ENCODE measurements at regions of chr4 and their contacts with region 1.

Region 1: GRCh38 chr4:74444891-74445642 is at the start of gene AREG:
- DNase-seq: peak; percentile 83
- ATAC-seq: peak; percentile 85
- H3K4me3 ChIP-seq: peak within 1 kb of the TSS; percentile 65 to 79
- H3K27ac ChIP-seq: peak within 1 kb of the TSS; percentile 85
- H3K4me1 ChIP-seq: peaks cover 40 to 53% of the 10 kb centered on the region in 2 experiments
- H3K27me3 ChIP-seq: no peaks in the 10 kb centered on the region
- CTCF ChIP-seq: peak; percentile 8 to 59 (median 51); a peak in 4 of 6 replicates
- POLR2A ChIP-seq: peak; percentile 72
- RAD21 ChIP-seq: peak; percentile 23
- total RNA-seq, gene AREG: 739 TPM

Region 2: DNA sequence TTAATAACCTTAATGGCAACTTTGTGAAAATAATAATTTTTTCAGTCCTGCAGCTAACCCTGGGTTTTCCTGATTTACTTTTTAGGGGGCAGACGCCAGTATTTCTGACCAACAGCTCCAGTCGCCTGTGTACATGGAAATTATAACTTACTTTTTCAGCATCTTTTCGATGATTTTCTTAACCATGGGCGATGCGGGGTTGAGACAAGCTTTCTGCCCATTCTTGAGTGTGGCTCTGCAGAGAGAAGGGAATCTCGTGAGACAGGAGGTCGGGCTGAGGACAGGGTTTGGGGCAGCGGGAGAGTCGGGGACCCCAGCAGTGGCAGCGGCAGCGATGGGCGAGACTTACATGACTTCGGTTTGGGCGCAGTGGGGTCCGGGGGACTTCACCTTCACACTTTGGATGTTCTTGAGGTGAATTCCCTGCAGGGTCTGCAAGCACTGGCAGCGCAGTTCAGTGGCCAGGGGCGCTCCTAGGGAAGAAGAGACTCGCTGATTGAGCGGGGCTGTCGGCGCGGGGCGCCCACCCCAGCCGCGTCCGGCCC is 346.5 kb before region 1 on chr4:
- CTCF ChIA-PET with region 1: no interaction called
- POLR2A ChIA-PET with region 1: no interaction called
- RAD21 ChIA-PET with region 1: no interaction called
- intact Hi-C with region 1: no loop called
- DNase-seq: no peak
- ATAC-seq: no peak
- H3K4me3 ChIP-seq: peak overlapping the region; percentile 59 to 75
- H3K27ac ChIP-seq: peak overlapping the region; percentile 39; the same call in 1 of the 2 replicates
- H3K4me1 ChIP-seq: peaks cover 2 to 23% of the 10 kb centered on the region in 2 experiments; a peak in 2 of 4 replicates
- H3K27me3 ChIP-seq: no peaks in the 10 kb centered on the region
- CTCF ChIP-seq: no peak; a peak in 1 of 6 replicates
- POLR2A ChIP-seq: no peak
- RAD21 ChIP-seq: no peak

Region 3: GRCh38 chr4:74370912-74371311 is 74.2 kb before region 1 on chr4:
- CTCF ChIA-PET with region 1: no interaction called
- POLR2A ChIA-PET with region 1: interaction called, 12 read pairs
- RAD21 ChIA-PET with region 1: interaction called in 1 of 2 experiments, 3 read pairs
- intact Hi-C with region 1: loop called (anchors 5 kb)
- DNase-seq: peak; percentile 70
- ATAC-seq: peak; percentile 63
- H3K4me3 ChIP-seq: peak overlapping the region in 1 of 2 experiments; percentile 8; a peak in 1 of 4 replicates
- H3K27ac ChIP-seq: peak overlapping the region; percentile 94
- H3K4me1 ChIP-seq: peaks cover 83 to 98% of the 10 kb centered on the region in 2 experiments
- H3K27me3 ChIP-seq: no peaks in the 10 kb centered on the region
- CTCF ChIP-seq: peak in 2 of 3 experiments; percentile 73 to 87; a peak in 4 of 6 replicates
- POLR2A ChIP-seq: no peak
- RAD21 ChIP-seq: no peak

Region 4: GRCh38 chr4:74376888-74377483 is 68.1 kb before region 1 on chr4:
- CTCF ChIA-PET with region 1: no interaction called
- POLR2A ChIA-PET with region 1: interaction called, 12 read pairs
- RAD21 ChIA-PET with region 1: no interaction called
- intact Hi-C with region 1: loop called (anchors 5 kb)
- DNase-seq: no peak
- ATAC-seq: no peak
- H3K4me3 ChIP-seq: no peak overlapping the region
- H3K27ac ChIP-seq: peak overlapping the region; percentile 94
- H3K4me1 ChIP-seq: peaks cover 53 to 86% of the 10 kb centered on the region in 2 experiments
- H3K27me3 ChIP-seq: no peaks in the 10 kb centered on the region
- CTCF ChIP-seq: peak in 2 of 3 experiments; percentile 57 to 62; a peak in 4 of 6 replicates
- POLR2A ChIP-seq: no peak
- RAD21 ChIP-seq: peak; percentile 76

Region 5: DNA sequence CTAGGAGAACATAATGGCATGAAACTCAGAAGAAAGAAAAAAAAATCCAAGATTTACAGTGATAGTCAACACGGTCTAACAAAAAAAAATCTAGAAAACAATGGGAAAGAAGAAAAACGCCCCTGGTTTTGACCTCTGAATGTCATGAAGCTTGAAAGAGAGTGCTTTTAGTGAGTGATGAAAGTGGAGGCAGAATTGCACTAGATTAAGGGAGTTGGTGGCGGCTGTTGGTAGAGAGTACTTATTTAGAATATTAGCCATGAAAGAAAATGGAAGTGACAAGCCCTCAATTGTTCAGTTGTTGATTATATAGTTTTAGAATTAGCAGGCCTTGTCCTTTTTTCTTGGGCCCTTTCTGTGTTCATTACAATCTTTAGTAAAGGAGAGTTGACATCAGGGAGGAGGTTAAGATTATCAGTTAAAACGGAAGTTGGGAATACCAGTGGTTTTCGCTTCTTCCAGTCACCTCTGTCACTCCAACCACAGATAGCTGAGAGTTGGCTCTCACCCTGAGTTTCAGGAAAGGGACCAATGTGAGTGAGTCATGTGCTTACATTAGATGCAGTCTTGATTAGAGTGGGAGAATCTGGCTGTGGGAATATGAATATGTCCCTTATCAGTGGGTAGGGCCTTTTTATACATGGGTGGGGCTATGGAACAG is 50.5 kb before region 1 on chr4:
- CTCF ChIA-PET with region 1: no interaction called
- POLR2A ChIA-PET with region 1: interaction called, 11 read pairs
- RAD21 ChIA-PET with region 1: no interaction called
- intact Hi-C with region 1: loop called (anchors 5 kb)
- DNase-seq: peak; percentile 82
- ATAC-seq: peak; percentile 72
- H3K4me3 ChIP-seq: peak overlapping the region in 1 of 2 experiments; percentile 8; a peak in 2 of 4 replicates
- H3K27ac ChIP-seq: peak overlapping the region; percentile 86
- H3K4me1 ChIP-seq: peaks cover 30 to 66% of the 10 kb centered on the region in 2 experiments
- H3K27me3 ChIP-seq: no peaks in the 10 kb centered on the region
- CTCF ChIP-seq: no peak
- POLR2A ChIP-seq: no peak
- RAD21 ChIP-seq: peak; percentile 33; the same call in 1 of the 2 replicates

Region 6: GRCh38 chr4:74410272-74410671 is 34.8 kb before region 1 on chr4:
- CTCF ChIA-PET with region 1: no interaction called
- POLR2A ChIA-PET with region 1: interaction called, 11 read pairs
- RAD21 ChIA-PET with region 1: no interaction called
- intact Hi-C with region 1: no loop called
- DNase-seq: no peak
- ATAC-seq: no peak
- H3K4me3 ChIP-seq: no peak overlapping the region
- H3K27ac ChIP-seq: no peak overlapping the region
- H3K4me1 ChIP-seq: peaks cover 23 to 47% of the 10 kb centered on the region in 2 experiments
- H3K27me3 ChIP-seq: no peaks in the 10 kb centered on the region
- CTCF ChIP-seq: no peak
- POLR2A ChIP-seq: no peak
- RAD21 ChIP-seq: no peak

Region 7: GRCh38 chr4:74418063-74418670 is 26.9 kb before region 1 on chr4:
- CTCF ChIA-PET with region 1: no interaction called
- POLR2A ChIA-PET with region 1: interaction called, 23 read pairs
- RAD21 ChIA-PET with region 1: no interaction called
- intact Hi-C with region 1: no loop called
- DNase-seq: peak; percentile 81
- ATAC-seq: peak; percentile 71
- H3K4me3 ChIP-seq: peak overlapping the region; percentile 24 to 49
- H3K27ac ChIP-seq: peak overlapping the region; percentile 80
- H3K4me1 ChIP-seq: peaks cover 51 to 65% of the 10 kb centered on the region in 2 experiments
- H3K27me3 ChIP-seq: no peaks in the 10 kb centered on the region
- CTCF ChIP-seq: no peak
- POLR2A ChIP-seq: no peak
- RAD21 ChIP-seq: no peak

Region 8: GRCh38 chr4:74531963-74532794 is 87.1 kb after region 1 on chr4:
- CTCF ChIA-PET with region 1: interaction called, 6 read pairs
- POLR2A ChIA-PET with region 1: interaction called, 21 read pairs
- RAD21 ChIA-PET with region 1: no interaction called
- intact Hi-C with region 1: loop called (anchors 2 kb)
- DNase-seq: peak; percentile 92
- ATAC-seq: peak; percentile 86
- H3K4me3 ChIP-seq: no peak overlapping the region
- H3K27ac ChIP-seq: peak overlapping the region; percentile 37; the same call in 1 of the 2 replicates
- H3K4me1 ChIP-seq: peaks cover 54 to 79% of the 10 kb centered on the region in 2 experiments
- H3K27me3 ChIP-seq: no peaks in the 10 kb centered on the region
- CTCF ChIP-seq: peak; percentile 59 to 98 (median 69)
- POLR2A ChIP-seq: no peak
- RAD21 ChIP-seq: peak; percentile 95

Region 9: DNA sequence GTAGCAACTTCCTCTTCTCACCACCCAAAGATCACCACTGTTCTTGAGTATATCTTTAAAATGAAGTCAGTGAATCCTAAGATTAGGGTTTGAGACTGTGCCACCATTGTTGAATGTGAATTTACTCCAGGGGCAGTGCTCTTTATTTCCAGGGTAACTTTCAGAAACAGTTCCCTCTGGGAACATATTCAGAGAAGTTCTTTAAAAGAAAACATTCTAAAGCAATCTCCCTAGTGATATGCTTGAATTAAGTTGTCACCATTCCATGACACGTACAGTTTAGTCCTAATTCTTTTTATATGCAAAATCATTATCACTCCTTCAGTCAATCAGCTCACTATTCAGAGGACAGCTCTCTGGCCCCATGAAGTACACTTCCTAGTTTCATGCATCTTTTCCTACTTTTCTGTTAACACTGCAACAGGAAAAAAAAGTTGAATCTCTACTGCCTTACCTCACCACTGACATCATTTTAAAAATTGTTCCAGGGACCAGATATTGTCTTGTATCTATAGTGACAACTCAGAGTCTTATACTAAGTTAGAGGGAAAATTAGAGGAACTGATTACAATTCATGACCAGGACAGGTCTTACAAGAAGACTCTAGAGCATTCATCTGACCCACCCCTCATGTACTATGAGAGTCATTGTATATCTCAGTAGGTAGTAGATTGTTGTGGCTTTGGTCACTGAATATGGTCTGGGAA is 537.6 kb after region 1 on chr4:
- CTCF ChIA-PET with region 1: no interaction called
- POLR2A ChIA-PET with region 1: no interaction called
- RAD21 ChIA-PET with region 1: no interaction called
- intact Hi-C with region 1: no loop called
- DNase-seq: no peak
- ATAC-seq: no peak
- H3K4me3 ChIP-seq: no peak overlapping the region
- H3K27ac ChIP-seq: no peak overlapping the region
- H3K4me1 ChIP-seq: no peaks in the 10 kb centered on the region
- H3K27me3 ChIP-seq: no peaks in the 10 kb centered on the region
- CTCF ChIP-seq: no peak
- POLR2A ChIP-seq: no peak
- RAD21 ChIP-seq: no peak

Measured in HCT116 (cell line).